ENCODE measurements at regions of chr9 and their contacts with region 1.

Region 1: DNA sequence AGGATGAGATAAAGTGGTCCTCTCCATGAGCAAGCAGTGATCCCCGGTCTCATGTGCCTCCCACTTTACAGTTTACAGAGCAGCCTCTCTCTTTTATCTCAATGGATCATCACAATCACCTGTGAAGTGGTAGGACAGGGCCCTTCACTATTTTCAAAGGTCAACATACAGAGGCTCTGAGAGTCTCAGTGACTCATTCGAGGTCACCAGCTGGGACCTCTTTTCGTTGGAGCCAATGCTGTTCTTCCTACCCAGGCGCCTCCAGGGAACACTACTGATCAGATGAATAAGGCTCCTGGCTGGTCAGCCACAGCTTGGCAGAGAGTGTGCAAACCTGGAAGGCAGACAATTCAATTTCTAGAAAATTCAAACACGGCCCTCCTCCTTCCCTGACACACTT is 16.6 kb downstream of the GGTA1 start:
- DNase-seq: no peak
- H3K4me3 ChIP-seq: no peak overlapping the region
- H3K27ac ChIP-seq: no peak overlapping the region
- H3K4me1 ChIP-seq: peaks cover 2% of the 10 kb centered on the region
- H3K27me3 ChIP-seq: no peaks in the 10 kb centered on the region
- CTCF ChIP-seq: no peak
- EP300 ChIP-seq: no peak
- POLR2A ChIP-seq: no peak

Region 2: DNA sequence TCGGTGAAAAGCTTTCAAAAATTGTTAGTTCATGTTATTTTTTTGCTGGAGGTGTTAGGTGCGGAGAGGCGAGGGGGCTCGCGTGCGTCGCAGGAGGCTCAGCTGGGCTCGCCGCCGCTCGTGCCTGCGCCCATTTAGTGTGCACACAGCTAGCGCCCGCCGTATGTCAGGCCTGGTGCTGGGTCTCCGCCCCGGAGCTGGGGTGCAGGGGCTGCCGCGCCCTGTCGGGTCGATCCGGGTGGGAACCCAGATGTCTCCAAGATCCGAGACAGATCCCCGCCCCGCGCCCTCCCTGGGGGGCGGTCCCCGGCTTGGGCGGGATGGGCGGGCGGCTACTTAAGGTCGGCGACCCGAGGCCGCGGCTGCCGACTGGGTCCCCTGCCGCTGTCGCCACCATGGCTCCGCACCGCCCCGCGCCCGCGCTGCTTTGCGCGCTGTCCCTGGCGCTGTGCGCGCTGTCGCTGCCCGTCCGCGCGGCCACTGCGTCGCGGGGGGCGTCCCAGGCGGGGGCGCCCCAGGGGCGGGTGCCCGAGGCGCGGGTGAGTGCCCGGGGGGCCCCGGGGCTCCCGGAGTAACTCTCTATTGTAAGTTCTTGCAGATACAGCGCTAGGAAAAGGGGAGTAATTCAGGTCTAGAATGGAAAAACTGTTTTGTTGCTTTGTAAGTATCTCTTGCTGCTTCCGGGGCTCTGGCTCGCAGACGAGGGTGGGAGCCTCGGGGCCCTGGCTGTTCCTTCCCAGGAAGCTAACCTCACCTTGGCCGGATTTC is 183.4 kb before region 1 on chr9:
- intact Hi-C with region 1: no loop called
- DNase-seq: peak in 4 of 5 donors; percentile 61 to 71 (median 66)
- H3K4me3 ChIP-seq: peak overlapping the region; percentile 56
- H3K27ac ChIP-seq: peak overlapping the region; percentile 75 to 85
- H3K4me1 ChIP-seq: peaks cover 30% of the 10 kb centered on the region
- H3K27me3 ChIP-seq: no peaks in the 10 kb centered on the region
- CTCF ChIP-seq: no peak
- EP300 ChIP-seq: no peak
- POLR2A ChIP-seq: no peak

Region 3: DNA sequence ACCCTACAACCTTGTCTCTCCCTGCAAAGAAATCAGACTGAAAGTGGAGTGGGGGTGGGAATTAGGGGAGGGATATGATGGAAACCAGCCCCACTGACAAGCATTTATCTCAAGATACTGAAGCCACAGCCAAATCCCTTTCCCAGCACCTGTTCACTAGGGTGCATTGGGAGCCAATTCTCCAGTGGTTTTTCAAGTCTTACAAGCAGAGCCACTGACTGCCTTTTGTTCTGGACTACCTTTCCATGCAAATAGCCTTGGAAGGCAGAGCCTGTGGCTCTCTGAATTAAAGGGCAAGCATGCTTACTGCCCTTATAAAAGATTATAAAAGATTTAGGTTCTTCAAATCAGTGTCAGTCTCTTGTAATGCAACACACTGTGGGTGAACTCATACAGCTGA is 25.4 kb after region 1 on chr9:
- intact Hi-C with region 1: no loop called
- DNase-seq: no peak
- H3K4me3 ChIP-seq: no peak overlapping the region
- H3K27ac ChIP-seq: no peak overlapping the region
- H3K4me1 ChIP-seq: peaks cover 2% of the 10 kb centered on the region
- H3K27me3 ChIP-seq: no peaks in the 10 kb centered on the region
- CTCF ChIP-seq: no peak
- EP300 ChIP-seq: no peak
- POLR2A ChIP-seq: no peak

Region 4: DNA sequence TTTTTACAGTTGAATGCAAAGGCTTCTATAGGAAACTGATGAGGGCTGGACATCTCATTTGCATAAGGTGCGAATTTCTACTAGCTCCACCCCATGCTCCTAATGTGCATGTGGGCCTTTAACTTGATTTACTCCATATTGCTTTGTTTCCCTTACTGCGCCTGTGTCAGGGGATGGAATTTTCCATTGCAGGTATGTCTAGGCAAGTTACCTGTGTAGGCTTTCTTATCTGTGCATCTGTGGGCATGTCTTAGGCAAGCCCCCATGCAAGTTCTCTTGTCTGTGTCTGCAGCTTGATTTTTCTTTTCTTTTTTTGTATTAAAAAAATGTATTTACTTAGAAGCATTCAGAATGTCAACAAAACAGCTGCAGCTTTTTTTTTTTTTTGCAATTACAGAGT is 36.0 kb after region 1 on chr9:
- intact Hi-C with region 1: loop called in 1 of 4 experiments (anchors 2 kb)
- DNase-seq: no peak
- H3K4me3 ChIP-seq: no peak overlapping the region
- H3K27ac ChIP-seq: no peak overlapping the region
- H3K4me1 ChIP-seq: no peaks in the 10 kb centered on the region
- H3K27me3 ChIP-seq: no peaks in the 10 kb centered on the region
- CTCF ChIP-seq: no peak
- EP300 ChIP-seq: no peak
- POLR2A ChIP-seq: no peak

Region 5: GRCh38 chr9:121566481-121567465 is 83.7 kb after region 1 on chr9:
- intact Hi-C with region 1: no loop called
- DNase-seq: peak; percentile 49 to 58 (median 54)
- H3K4me3 ChIP-seq: peak overlapping the region; percentile 26
- H3K27ac ChIP-seq: peak overlapping the region; percentile 41 to 70
- H3K4me1 ChIP-seq: peaks cover 27% of the 10 kb centered on the region
- H3K27me3 ChIP-seq: no peaks in the 10 kb centered on the region
- CTCF ChIP-seq: no peak
- EP300 ChIP-seq: no peak
- POLR2A ChIP-seq: no peak

Measured in ovary (tissue), 10 donors.